Activated CD4-positive, alpha-beta memory T cell treated with anti-CD3 and anti-CD28 coated beads for 36 hours (primary cell): ENCODE measurements at regions of chr2 and their contacts with region 1.

Region 1: DNA sequence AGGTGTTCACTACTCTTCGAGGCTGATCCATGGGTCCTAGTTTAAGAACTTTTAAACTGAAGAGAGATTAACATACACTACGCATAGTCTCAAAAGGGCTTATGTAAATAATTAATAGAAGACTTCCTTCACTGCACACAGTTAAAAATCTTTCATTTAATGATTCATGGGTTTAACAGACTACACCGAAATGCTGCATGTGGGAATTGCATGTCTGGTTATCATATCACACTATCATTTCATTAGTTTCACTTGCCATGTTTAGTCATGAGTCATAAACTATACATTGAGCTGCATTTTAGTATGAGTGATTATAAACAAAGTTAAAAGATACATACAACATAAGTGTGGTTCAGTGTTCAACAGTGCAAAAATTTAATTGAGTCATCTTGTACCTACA is 31.2 kb downstream of the GLS start:
- DNase-seq: no peak
- H3K4me3 Mint-ChIP-seq: no peak overlapping the region
- H3K27ac Mint-ChIP-seq: peak overlapping the region; percentile 54
- H3K4me1 Mint-ChIP-seq: peaks cover 38% of the 10 kb centered on the region
- H3K27me3 Mint-ChIP-seq: no peaks in the 10 kb centered on the region

Region 2: DNA sequence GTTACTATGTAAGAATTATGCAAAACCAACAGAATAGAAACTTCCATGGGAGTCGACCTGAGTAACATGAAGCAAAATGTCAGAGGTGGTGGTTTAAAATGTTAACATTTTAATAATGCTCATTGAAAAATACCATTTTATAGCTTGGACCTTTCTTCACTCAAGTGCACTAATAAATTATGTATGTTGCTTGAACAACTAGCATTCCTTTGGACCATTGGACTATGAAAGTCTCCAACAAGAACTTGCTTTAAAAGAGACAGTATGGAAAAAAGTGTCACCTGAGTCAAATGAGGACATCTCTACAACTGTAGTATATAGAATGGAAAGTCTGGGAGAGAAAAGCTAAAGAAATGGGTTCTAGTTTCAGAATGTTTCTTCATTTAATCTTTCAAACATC is 20.7 kb after region 1 on chr2:
- CTCF ChIA-PET with region 1: no interaction called
- POLR2A ChIA-PET with region 1: no interaction called
- intact Hi-C with region 1: loop called (anchors 2 kb)
- DNase-seq: no peak
- H3K4me3 Mint-ChIP-seq: no peak overlapping the region
- H3K27ac Mint-ChIP-seq: no peak overlapping the region
- H3K4me1 Mint-ChIP-seq: peaks cover 14% of the 10 kb centered on the region
- H3K27me3 Mint-ChIP-seq: no peaks in the 10 kb centered on the region